GM12878 (cell line): ENCODE measurements at regions of chr17 and their contacts with region 1.

Region 1: DNA sequence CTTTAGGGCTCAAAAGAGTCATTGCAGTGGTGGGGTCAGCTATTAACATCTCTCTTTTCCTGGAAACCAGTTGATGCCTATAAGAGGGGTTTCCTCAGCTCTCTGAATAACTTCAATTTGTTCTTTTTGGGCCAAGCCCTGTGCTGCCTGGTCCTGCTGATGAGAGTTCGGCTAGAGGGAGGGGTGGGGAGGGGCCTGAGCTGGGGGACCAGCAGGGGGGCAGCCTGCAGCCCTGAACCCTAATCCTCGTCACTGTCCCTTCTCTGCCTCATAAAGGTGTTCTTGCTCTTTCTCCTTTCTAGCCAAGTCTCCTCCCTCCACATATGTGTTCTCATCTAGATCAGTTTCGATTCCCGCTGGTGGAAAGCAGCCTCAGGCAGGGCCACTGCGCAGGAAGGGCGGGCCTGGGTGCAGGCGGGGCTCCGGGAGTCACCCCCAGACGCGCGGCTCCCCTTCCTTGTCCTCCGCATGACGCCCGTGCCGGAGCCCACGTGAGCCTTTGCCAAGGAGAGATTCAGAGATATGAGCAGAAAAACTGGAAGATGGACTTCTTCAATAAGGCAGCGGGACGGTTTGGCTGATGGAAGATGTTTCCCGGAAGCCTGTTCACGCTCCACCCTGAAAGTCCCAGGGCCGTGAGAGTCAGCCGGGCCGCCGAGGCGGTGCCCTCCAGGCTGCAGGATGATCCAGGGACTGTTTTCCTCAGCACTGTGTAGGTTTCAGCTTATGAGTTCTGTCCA is 15.0 kb upstream of the RHOT1 start:
- DNase-seq: peak; percentile 69
- ATAC-seq: peak; percentile 98
- H3K4me3 ChIP-seq: peak overlapping the region; percentile 80
- H3K27ac ChIP-seq: peak overlapping the region; percentile 95
- H3K4me1 ChIP-seq: peaks cover 7% of the 10 kb centered on the region; the same call in 1 of the 2 replicates
- H3K27me3 ChIP-seq: no peaks in the 10 kb centered on the region
- CTCF ChIP-seq: no peak
- EP300 ChIP-seq: no peak
- POLR2A ChIP-seq: peak; percentile 83
- RAD21 ChIP-seq: no peak

Region 2: DNA sequence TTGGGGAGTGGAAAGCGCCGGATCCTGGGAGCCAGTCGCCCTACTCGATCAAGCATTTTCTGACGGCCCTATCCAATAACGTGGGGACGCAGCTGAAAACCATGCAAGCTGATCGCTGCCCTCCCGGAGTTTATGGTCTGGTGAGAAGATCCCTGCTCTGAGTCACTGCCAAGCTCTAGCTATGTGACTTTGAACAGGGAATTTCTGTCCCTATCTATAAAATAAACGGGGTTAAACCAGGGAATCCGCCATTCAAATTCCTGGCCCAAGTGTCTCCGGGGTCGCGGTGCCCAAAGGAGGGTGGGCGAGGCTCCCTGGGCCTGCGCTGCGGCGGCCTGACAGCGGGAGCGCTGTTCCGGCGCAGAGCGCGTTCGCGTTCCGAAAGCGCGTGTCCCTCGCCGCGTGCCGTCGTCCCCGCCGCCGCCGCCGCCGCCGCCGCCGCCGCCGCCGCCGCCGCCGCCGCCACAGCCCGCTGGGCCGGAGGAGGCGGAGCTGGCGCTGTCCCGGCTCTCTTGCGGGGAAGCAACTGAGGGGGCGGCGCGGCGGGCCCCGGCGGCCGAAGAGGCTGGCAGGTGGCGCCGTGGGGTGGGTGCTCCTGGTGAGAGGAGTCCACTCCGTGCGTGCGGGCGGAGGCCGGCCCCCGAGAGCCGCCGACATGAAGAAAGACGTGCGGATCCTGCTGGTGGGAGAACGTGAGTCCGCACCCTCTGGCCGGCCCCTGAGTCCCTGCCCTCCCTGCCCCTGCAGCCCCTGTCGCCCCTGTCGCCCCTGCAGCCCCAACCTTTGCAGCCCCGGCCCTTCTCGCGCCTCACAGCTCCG is 14.9 kb after region 1 on chr17 and contains the start of gene RHOT1:
- CTCF ChIA-PET with region 1: interaction called, 72 read pairs
- POLR2A ChIA-PET with region 1: interaction called, 3 read pairs
- RAD21 ChIA-PET with region 1: interaction called, 7 read pairs
- SMC1A ChIA-PET with region 1: interaction called, 19 read pairs
- in situ Hi-C with region 1: no loop called
- intact Hi-C with region 1: no loop called
- DNase-seq: peak; percentile 36
- ATAC-seq: peak; percentile 85
- H3K4me3 ChIP-seq: peak within 1 kb of the TSS; percentile 95
- H3K27ac ChIP-seq: peak within 1 kb of the TSS; percentile 64
- H3K4me1 ChIP-seq: peaks cover 4% of the 10 kb centered on the region
- H3K27me3 ChIP-seq: no peaks in the 10 kb centered on the region
- CTCF ChIP-seq: peak; percentile 62 to 81 (median 70)
- EP300 ChIP-seq: no peak
- POLR2A ChIP-seq: 0 out of 2 replicates have a peak, but pooled peaks have one; percentile 55
- RAD21 ChIP-seq: no peak
- polyA plus RNA-seq, gene RHOT1: 13.3 to 14.1 TPM